Caco-2 (cell line): ENCODE measurements at regions of chr7 and their contacts with region 1.

Region 1: GRCh38 chr7:96321658-96322372 is at the start of gene SLC25A13:
- DNase-seq: peak; percentile 95 to 97
- H3K4me3 ChIP-seq: peak within 1 kb of the TSS; percentile 90
- H3K4me3 Mint-ChIP-seq: peak within 1 kb of the TSS; percentile 90
- H3K27ac Mint-ChIP-seq: peak within 1 kb of the TSS; percentile 89
- H3K4me1 ChIP-seq: peaks cover 14% of the 10 kb centered on the region
- H3K4me1 Mint-ChIP-seq: peaks cover 15% of the 10 kb centered on the region
- H3K27me3 ChIP-seq: no peaks in the 10 kb centered on the region
- H3K27me3 Mint-ChIP-seq: no peaks in the 10 kb centered on the region
- CTCF ChIP-seq: no peak
- total RNA-seq, gene SLC25A13: 100 and 102 TPM in 2 replicates

Region 2: DNA sequence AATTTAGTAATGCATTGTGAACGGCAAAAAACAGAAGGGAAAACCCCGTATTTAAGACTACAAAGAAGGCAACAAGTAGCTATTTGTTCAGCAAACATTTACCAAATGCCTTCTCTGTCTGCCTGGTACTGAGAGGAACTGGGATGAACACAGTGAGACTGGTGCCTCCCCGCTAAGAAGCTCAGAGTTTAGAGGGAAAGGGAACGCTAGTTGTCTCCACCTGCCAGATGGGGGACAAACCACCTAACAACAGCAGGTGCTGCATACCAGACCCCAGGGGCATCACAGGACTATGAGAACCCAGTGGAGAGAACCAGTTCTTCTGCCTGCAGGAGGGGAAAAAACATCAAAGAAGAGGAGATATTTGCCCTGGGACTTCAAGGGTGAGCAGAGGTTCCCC is 147.0 kb before region 1 on chr7:
- CTCF ChIA-PET with region 1: no interaction called
- POLR2A ChIA-PET with region 1: no interaction called
- intact Hi-C with region 1: loop called (anchors 2 kb)
- DNase-seq: peak; percentile 84 to 85
- H3K4me3 ChIP-seq: no peak overlapping the region
- H3K4me3 Mint-ChIP-seq: peak overlapping the region; percentile 34
- H3K27ac Mint-ChIP-seq: peak overlapping the region; percentile 82
- H3K4me1 ChIP-seq: peaks cover 73% of the 10 kb centered on the region
- H3K4me1 Mint-ChIP-seq: peaks cover 54% of the 10 kb centered on the region
- H3K27me3 ChIP-seq: no peaks in the 10 kb centered on the region
- H3K27me3 Mint-ChIP-seq: no peaks in the 10 kb centered on the region
- CTCF ChIP-seq: peak in 1 of 2 experiments; percentile 14

Region 3: DNA sequence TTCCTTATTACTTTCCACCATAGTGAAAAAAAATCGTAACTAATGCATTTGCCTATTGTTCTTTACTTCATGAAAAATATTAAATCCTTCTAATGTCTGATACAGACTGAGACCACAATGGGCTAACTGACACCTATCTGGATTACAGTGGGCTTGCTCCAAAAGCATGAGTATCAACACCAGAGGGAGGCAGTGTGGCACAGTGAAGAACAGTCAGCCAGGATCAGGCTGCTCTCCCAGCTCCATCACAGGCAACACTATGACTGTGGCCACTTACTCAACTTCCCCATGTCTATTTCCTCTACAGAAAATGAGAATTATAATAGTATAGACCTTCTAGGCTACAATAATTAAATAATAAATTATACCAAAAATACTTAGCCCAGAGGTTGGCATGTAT is 97.1 kb before region 1 on chr7:
- CTCF ChIA-PET with region 1: no interaction called
- POLR2A ChIA-PET with region 1: no interaction called
- intact Hi-C with region 1: loop called (anchors 2 kb)
- DNase-seq: peak in 1 of 2 experiments; percentile 26
- H3K4me3 ChIP-seq: no peak overlapping the region
- H3K4me3 Mint-ChIP-seq: no peak overlapping the region
- H3K27ac Mint-ChIP-seq: no peak overlapping the region
- H3K4me1 ChIP-seq: peaks cover 2% of the 10 kb centered on the region
- H3K4me1 Mint-ChIP-seq: peaks cover 9% of the 10 kb centered on the region
- H3K27me3 ChIP-seq: no peaks in the 10 kb centered on the region
- H3K27me3 Mint-ChIP-seq: no peaks in the 10 kb centered on the region
- CTCF ChIP-seq: peak in 1 of 2 experiments; percentile 18

Region 4: GRCh38 chr7:96359876-96360275 is 38.1 kb after region 1 on chr7:
- CTCF ChIA-PET with region 1: no interaction called
- POLR2A ChIA-PET with region 1: no interaction called
- intact Hi-C with region 1: loop called (anchors 5 kb)
- DNase-seq: peak; percentile 36 to 53
- H3K4me3 ChIP-seq: no peak overlapping the region
- H3K4me3 Mint-ChIP-seq: no peak overlapping the region
- H3K27ac Mint-ChIP-seq: no peak overlapping the region
- H3K4me1 ChIP-seq: peaks cover 10% of the 10 kb centered on the region; the same call in 1 of the 2 replicates
- H3K4me1 Mint-ChIP-seq: peaks cover 6% of the 10 kb centered on the region
- H3K27me3 ChIP-seq: no peaks in the 10 kb centered on the region
- H3K27me3 Mint-ChIP-seq: no peaks in the 10 kb centered on the region
- CTCF ChIP-seq: no peak

Region 5: GRCh38 chr7:96414931-96415292 is 93.1 kb after region 1 on chr7:
- CTCF ChIA-PET with region 1: no interaction called
- POLR2A ChIA-PET with region 1: no interaction called
- intact Hi-C with region 1: loop called (anchors 5 kb)
- DNase-seq: peak; percentile 37 to 45
- H3K4me3 ChIP-seq: no peak overlapping the region
- H3K4me3 Mint-ChIP-seq: no peak overlapping the region
- H3K27ac Mint-ChIP-seq: peak overlapping the region; percentile 33
- H3K4me1 ChIP-seq: peaks cover 18% of the 10 kb centered on the region
- H3K4me1 Mint-ChIP-seq: peaks cover 15% of the 10 kb centered on the region
- H3K27me3 ChIP-seq: no peaks in the 10 kb centered on the region
- H3K27me3 Mint-ChIP-seq: no peaks in the 10 kb centered on the region
- CTCF ChIP-seq: peak; percentile 27 to 45